WTC11 (cell line): ENCODE measurements at regions of chr14 and their contacts with region 1.

Region 1: DNA sequence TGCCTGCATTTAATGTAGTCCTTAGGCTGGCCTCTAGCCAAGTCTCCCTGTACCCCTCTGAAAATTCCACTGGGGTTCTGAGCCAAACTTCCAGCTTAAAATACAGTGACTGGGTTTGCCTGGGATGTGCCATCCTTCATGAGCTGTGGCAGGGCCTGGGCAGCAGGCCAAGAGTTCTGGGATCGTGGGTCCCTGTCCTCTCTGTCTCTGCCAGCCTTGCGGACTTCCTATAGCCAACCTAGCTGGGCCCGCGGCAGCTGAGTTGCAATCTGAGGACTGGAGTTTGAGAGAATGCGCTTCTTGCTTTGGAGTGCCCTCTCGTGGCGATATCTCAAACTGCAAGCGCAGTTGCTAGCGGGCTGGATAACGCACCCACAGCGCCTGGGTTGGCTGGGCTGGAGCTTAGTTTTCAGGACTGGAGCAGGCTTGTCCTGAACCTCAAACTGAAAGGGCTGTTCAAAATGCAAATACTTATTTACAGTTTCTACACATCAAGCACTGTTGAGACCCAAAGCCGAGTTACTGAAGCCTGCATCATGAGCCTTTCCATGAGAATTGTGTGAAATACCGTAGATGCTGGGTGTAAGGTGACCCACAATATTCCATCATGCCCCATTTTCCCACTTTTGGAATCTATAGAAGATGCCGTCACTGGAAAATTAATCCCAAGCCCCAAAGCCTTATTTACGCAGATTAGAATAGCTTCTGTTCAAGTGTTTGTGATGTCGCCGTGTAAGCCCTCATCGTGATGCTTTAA is 7.3 kb upstream of the IFI27L2 start:
- DNase-seq: peak; percentile 93
- ATAC-seq: peak; percentile 87
- H3K4me3 Mint-ChIP-seq: no peak overlapping the region
- H3K27ac Mint-ChIP-seq: no peak overlapping the region
- H3K4me1 Mint-ChIP-seq: peaks cover 19% of the 10 kb centered on the region
- H3K27me3 Mint-ChIP-seq: peaks cover 7% of the 10 kb centered on the region; the same call in 1 of the 2 replicates
- CTCF ChIP-seq: peak; percentile 92

Region 2: DNA sequence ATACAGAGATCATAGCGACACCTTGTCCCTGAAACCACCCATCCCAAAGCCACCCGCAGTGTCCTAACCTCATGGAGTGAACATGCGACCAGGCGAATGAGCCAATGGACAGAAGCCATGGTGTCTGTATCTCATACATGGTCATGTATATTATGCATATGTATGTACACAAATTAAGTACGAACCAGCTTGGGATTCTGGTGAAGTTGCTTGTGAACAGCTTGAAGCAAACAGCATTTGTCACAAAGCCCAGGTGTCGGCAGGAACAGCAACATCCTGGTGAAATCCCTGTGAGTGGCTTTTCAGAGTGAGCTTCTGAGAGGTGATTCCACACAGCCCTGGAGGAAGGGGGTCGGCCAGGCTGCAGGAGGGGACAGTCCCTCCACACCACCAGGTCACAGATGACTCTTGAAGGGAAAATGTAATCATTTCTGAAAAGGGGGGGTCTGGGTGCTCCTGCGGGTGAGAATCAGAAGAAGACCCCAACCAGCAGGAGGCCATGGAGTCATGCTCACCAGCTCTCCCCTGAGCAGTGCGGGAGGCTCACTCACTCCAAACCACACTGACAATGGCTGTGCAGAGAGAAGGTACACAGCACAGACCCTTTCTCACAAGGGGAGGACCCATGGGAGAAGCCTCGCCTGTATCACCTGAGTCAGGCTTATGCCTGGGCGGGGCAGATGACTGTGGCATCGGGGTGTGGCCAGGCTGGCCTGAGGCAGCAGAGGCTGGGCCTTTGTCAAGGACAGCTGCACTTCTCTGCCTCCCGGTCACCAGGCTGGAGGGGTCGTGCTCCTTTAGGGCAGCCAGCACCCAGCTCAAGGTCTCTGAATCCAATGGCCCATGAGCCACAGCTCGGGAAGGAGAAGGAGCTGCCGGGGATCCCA is 1199.5 kb before region 1 on chr14:
- CTCF ChIA-PET with region 1: no interaction called
- POLR2A ChIA-PET with region 1: no interaction called
- DNase-seq: no peak
- ATAC-seq: no peak
- H3K4me3 Mint-ChIP-seq: no peak overlapping the region
- H3K27ac Mint-ChIP-seq: no peak overlapping the region; the same call in 1 of the 2 replicates
- H3K4me1 Mint-ChIP-seq: no peaks in the 10 kb centered on the region
- H3K27me3 Mint-ChIP-seq: no peaks in the 10 kb centered on the region
- CTCF ChIP-seq: no peak

Region 3: DNA sequence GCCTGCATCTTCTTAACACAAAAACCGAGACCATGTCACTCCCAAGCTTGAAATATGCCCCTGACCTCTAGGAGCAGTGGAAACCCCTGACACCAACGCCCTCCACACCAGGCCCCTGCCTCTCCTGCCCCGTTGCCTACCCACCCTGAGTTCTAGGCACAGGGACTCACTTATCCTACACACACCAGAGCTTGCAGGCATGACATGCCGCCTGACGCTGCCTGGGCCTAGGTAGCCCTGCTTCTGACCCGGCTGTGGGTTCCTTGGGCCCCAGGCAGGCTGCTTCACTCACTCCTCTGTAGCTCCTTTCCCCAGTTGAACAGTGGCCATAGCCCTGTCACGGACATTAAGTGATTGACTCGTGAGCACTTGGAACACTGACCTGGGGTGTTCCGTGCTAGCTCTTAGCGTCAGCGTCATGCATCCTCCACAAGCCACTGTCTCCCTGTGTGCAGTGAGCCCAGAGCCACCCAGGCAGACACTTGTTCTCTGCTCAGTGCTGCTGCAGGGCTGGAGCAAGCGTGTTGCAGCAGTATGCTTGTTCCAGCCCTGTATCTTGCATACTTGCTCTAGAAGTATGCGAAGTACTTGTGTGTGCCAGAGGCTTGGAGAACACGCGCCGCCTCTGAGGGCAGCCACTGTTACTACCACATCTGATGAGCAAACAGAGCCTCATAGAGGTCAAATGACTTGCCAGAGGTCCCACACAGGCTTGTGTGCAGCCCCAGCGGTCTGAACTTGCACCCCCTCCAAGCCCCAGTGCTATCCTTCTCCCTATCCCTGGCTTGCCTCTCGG is 95.0 kb before region 1 on chr14:
- CTCF ChIA-PET with region 1: interaction called, 76 read pairs
- POLR2A ChIA-PET with region 1: no interaction called
- DNase-seq: no peak
- ATAC-seq: no peak
- H3K4me3 Mint-ChIP-seq: no peak overlapping the region
- H3K27ac Mint-ChIP-seq: no peak overlapping the region
- H3K4me1 Mint-ChIP-seq: peaks cover under 1% of the 10 kb centered on the region; the same call in 1 of the 2 replicates
- H3K27me3 Mint-ChIP-seq: no peaks in the 10 kb centered on the region
- CTCF ChIP-seq: no peak

Region 4: GRCh38 chr14:94066089-94066676 is 70.6 kb before region 1 on chr14:
- CTCF ChIA-PET with region 1: interaction called, 22 read pairs
- POLR2A ChIA-PET with region 1: no interaction called
- DNase-seq: no peak
- ATAC-seq: peak; percentile 53
- H3K4me3 Mint-ChIP-seq: no peak overlapping the region
- H3K27ac Mint-ChIP-seq: peak overlapping the region; percentile 42
- H3K4me1 Mint-ChIP-seq: peaks cover 42% of the 10 kb centered on the region
- H3K27me3 Mint-ChIP-seq: no peaks in the 10 kb centered on the region; the same call in 1 of the 2 replicates
- CTCF ChIP-seq: no peak

Region 5: DNA sequence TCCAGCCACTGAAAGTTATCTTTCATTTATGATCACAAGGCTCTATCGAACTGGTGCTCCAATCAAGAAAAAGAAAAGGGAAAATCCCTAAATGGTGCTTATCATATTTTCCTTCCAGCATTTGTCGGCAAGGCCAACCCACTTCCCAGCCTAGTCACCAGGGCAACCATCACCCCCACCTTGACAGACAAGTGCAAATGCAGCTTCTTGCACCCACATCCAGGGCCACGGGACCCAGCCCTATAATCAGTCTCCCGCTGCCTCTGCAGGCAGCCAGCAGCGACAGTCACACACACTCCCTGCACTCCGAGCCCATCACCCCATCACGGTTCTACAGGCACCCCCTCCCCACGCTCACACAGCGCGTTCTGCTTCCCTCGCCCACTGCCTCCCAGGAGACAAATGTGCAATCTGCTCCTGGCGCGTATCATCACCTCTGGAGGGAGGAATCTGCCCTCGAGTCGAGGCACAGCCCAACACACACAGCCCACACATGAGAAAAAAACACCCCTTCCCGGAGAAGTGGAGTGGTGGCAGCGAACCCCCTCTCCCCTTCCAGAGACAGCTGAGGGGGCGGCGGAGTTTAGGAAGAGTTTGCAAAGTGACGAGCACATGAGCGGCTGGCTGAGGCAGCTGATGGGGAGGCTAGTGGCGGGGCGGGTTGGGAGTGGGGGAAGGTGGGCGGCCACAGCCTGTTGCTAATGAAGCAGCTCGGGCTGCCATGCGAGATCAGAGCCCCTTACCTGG is 28.1 kb after region 1 on chr14:
- CTCF ChIA-PET with region 1: interaction called, 28 read pairs
- POLR2A ChIA-PET with region 1: no interaction called
- DNase-seq: peak; percentile 34
- ATAC-seq: peak; percentile 66
- H3K4me3 Mint-ChIP-seq: peak overlapping the region; percentile 45
- H3K27ac Mint-ChIP-seq: no peak overlapping the region
- H3K4me1 Mint-ChIP-seq: peaks cover 20% of the 10 kb centered on the region
- H3K27me3 Mint-ChIP-seq: peaks cover 4% of the 10 kb centered on the region
- CTCF ChIP-seq: no peak

Region 6: DNA sequence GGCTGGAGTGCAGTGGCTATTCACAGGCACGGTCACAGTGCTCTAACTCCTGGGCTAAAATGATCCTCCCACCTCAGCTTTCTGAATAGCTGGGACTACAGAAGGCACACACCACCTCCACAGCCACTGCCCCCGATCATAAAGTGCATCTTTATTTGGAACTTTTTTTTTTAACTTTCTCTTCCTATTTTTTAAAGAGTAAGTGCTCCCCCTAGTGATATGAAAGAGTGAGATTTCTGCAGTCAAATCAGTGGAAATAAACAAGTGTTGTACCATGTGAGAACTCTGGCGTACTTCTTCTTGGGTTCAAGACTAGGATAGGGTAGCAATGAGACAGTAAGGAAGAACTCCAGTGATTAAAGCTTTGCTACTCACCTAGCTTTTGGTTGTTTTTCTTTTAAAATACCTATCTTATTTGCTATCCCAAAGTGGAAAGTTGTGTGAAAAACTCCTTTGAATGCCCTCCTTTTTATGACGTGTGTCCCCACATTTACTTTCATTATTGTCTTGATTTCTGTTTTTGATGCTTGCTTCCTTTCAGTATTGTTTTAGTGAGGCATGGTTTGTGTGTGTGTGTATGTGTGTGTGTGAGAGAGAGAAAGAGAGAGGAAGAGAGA is 44.0 kb after region 1 on chr14:
- CTCF ChIA-PET with region 1: interaction called, 41 read pairs
- POLR2A ChIA-PET with region 1: interaction called, 5 read pairs
- DNase-seq: no peak
- ATAC-seq: peak; percentile 61
- H3K4me3 Mint-ChIP-seq: no peak overlapping the region
- H3K27ac Mint-ChIP-seq: no peak overlapping the region
- H3K4me1 Mint-ChIP-seq: peaks cover 36% of the 10 kb centered on the region
- H3K27me3 Mint-ChIP-seq: peaks cover 16% of the 10 kb centered on the region
- CTCF ChIP-seq: no peak

Region 7: GRCh38 chr14:94267347-94267746 is 130.6 kb after region 1 on chr14:
- CTCF ChIA-PET with region 1: no interaction called
- POLR2A ChIA-PET with region 1: no interaction called
- DNase-seq: no peak
- ATAC-seq: no peak
- H3K4me3 Mint-ChIP-seq: no peak overlapping the region
- H3K27ac Mint-ChIP-seq: no peak overlapping the region
- H3K4me1 Mint-ChIP-seq: no peaks in the 10 kb centered on the region
- H3K27me3 Mint-ChIP-seq: no peaks in the 10 kb centered on the region
- CTCF ChIP-seq: no peak